Activated B cell treated with CpG ODN at 0.5 μM for 24 hours (primary cell): ENCODE measurements at regions of chr3 and their contacts with region 1.

Region 1: GRCh38 chr3:112425858-112426750 is 73.2 kb downstream of the BTLA start:
- DNase-seq: no peak
- ATAC-seq: peak; percentile 72
- H3K4me3 Mint-ChIP-seq: peak overlapping the region; percentile 58
- H3K27ac Mint-ChIP-seq: peak overlapping the region; percentile 92
- H3K4me1 Mint-ChIP-seq: peaks cover 44% of the 10 kb centered on the region
- H3K27me3 Mint-ChIP-seq: no peaks in the 10 kb centered on the region
- CTCF ChIP-seq: no peak

Region 2: GRCh38 chr3:112111785-112112402 is 314.2 kb before region 1 on chr3:
- CTCF ChIA-PET with region 1: no interaction called
- POLR2A ChIA-PET with region 1: no interaction called
- intact Hi-C with region 1: no loop called
- DNase-seq: no peak
- ATAC-seq: peak; percentile 79
- H3K4me3 Mint-ChIP-seq: no peak overlapping the region
- H3K27ac Mint-ChIP-seq: no peak overlapping the region
- H3K4me1 Mint-ChIP-seq: peaks cover 53% of the 10 kb centered on the region
- H3K27me3 Mint-ChIP-seq: no peaks in the 10 kb centered on the region
- CTCF ChIP-seq: peak; percentile 68

Region 3: GRCh38 chr3:112437146-112438022 is 11.3 kb after region 1 on chr3:
- CTCF ChIA-PET with region 1: no interaction called
- POLR2A ChIA-PET with region 1: no interaction called
- intact Hi-C with region 1: loop called (anchors 2 kb)
- DNase-seq: no peak
- ATAC-seq: peak; percentile 84
- H3K4me3 Mint-ChIP-seq: no peak overlapping the region
- H3K27ac Mint-ChIP-seq: no peak overlapping the region
- H3K4me1 Mint-ChIP-seq: peaks cover 58% of the 10 kb centered on the region
- H3K27me3 Mint-ChIP-seq: no peaks in the 10 kb centered on the region
- CTCF ChIP-seq: no peak

Region 4: GRCh38 chr3:112473212-112473640 is 47.1 kb after region 1 on chr3:
- CTCF ChIA-PET with region 1: no interaction called
- POLR2A ChIA-PET with region 1: no interaction called
- intact Hi-C with region 1: loop called (anchors 2 kb)
- DNase-seq: no peak
- ATAC-seq: peak; percentile 80
- H3K4me3 Mint-ChIP-seq: peak overlapping the region; percentile 82
- H3K27ac Mint-ChIP-seq: peak overlapping the region; percentile 98
- H3K4me1 Mint-ChIP-seq: peaks cover 88% of the 10 kb centered on the region
- H3K27me3 Mint-ChIP-seq: no peaks in the 10 kb centered on the region
- CTCF ChIP-seq: no peak